Left cardiac atrium (tissue), 4 donors: ENCODE measurements at regions of chr11 and their contacts with region 1.

Region 1: DNA sequence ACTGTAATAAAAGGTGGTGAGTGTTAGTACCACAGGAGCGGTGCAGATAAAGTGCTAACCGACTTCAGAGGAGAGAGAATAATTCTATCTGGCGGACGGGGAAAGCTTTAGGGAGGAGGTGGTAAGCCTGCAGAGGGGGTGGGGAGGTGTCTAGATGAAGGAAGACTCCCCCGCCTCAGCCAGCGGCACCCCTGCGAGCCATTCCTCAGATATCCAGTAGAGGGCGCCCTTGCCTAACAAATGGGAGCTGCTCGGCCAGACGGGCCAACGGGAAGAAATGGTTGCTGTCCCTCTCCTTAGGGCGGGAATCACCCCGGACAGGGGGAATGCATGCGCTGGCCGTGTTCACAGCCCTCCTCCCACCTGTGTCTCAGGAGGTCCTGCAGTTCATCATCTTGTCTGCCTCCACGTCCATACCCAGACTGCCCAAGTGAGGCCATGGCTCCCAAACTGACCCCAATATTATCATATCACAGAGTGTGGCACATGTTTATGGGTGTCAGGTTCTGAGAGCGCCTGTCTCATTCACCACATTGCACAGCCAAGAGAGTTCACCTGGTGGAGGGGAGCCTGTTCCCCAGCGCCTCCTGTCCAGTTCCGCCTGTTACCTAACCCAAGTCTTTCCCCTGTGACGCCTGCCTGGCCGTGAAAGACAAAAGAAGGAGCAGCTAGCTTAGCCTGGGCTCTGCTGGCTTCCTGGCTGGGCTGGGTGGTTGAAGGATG is 85.5 kb downstream of the ST3GAL4 start:
- DNase-seq: peak; percentile 77
- ATAC-seq: peak; percentile 62 to 67

Region 2: DNA sequence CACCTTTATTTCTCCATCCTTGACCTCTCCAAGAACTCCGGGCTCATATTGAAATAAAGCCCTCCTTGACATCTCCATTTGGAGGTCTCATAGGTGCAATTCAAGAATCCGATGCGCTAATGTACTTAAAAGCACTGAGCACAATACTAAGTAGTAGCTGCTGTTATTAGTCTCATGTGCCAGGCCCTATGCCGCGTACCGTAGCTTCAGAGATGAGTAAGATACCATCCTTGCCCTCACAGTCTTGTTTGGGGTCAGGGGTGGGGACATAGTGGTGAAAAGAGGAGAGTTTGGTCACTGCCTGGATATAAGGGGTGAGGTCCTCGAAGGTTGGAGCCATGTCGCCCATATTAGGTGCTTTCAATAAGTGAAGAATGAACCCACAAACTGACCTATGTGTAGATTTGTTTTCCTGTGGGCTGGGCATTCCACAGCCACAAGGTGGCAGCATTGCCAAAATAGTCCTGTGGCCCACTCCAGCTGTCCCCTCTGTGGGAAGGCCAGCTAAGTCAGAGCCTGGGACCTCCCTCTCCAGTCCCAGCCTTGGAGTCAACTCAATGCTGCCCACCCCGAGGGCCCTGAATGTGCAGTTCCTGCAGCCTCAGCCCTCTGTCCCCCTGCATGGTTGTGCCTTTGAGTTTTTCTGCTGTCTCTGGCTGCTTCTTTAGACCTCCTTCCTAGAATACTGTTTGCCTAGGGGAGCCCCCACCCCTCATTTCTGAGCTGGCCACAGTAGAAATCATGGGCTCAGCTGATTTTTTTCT is 130.5 kb before region 1 on chr11:
- intact Hi-C with region 1: loop called in 1 of 2 experiments (anchors 2 kb)
- DNase-seq: peak; percentile 83
- ATAC-seq: peak; percentile 94 to 96

Region 3: DNA sequence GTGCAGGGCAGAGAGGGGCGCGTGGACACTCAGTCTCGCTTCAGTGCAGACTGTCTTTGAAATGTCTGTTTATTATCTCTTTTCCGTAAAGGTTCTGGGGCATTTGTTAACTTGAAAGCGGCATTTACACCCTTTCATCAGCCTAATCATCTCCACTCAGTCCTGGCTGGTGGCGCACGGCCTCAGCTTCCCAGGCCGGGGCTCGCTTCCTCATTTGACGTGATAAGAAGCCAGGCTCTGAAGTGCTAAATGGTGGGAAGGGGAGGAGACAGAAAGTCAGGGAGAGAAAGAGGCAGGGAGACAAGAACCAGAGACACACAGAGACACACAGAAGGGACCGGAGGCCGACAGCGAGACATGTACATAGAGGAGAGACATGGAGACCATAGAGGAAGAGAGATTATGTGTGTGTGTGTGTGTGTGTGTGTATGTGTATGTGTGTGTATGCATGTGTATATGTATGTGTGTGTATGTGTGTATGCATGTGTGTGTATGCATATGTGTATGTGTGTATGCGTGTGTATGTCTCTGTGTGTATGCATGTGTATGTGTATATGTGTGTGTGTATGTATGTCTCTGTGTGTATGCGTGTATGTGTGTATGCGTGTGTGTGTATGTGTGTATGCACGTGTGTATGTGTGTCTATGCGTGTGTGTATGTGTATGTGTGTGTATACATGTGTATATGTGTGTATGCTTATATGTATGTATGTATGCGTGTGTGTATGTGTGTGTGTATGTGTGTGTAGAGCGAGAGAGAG is 16.0 kb after region 1 on chr11:
- intact Hi-C with region 1: loop called in 1 of 2 experiments (anchors 1 kb)
- DNase-seq: no peak
- ATAC-seq: no peak

Region 4: GRCh38 chr11:126480410-126481302 is 39.7 kb after region 1 on chr11:
- intact Hi-C with region 1: loop called (anchors 2 kb)
- DNase-seq: peak; percentile 86
- ATAC-seq: peak; percentile 88 to 94

Region 5: GRCh38 chr11:126989942-126990715 is 549.2 kb after region 1 on chr11:
- intact Hi-C with region 1: loop called in 1 of 2 experiments (anchors 5 kb)
- DNase-seq: peak; percentile 76
- ATAC-seq: peak; percentile 72 to 89

Region 6: DNA sequence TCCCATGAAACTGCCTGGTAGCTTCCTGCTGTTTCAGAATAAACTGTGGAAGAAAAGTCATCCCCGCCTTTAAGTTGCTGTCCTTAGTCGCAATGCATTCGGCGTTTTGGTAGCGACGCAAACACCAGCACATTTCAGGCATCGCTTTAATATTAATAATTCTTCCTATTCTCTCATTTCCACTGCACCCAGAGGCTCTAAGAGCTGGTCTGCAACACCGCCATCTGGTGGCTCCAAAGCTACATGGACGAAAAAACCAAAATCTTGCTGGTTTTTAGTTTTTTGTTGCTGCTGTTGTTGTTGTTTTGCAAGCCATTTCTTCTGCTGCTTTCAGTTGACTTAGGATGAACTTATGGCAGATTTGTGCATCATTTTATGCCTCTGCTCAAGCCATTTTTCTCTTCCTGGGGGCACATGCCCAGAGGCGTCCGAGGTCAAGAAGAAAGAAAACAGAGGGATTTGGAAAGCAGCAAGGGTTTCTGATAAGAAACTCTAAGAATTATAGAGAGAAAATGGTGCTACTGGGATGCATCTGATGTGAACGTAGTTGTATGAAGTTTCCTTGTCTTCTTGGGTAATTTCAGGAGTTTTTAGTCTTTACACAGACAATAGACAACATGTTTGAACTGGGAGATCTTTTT is 905.0 kb after region 1 on chr11:
- intact Hi-C with region 1: loop called (anchors 5 to 10 kb)
- DNase-seq: peak; percentile 43
- ATAC-seq: no peak